MCF 10A (cell line): ENCODE measurements at regions of chr14 and their contacts with region 1.

Region 1: GRCh38 chr14:102694530-102695166 is 82.6 kb upstream of the TRAF3 start:
- DNase-seq: peak; percentile 76
- H3K4me3 Mint-ChIP-seq: no peak overlapping the region
- H3K27ac Mint-ChIP-seq: no peak overlapping the region
- H3K4me1 Mint-ChIP-seq: peaks cover 27% of the 10 kb centered on the region
- H3K27me3 Mint-ChIP-seq: no peaks in the 10 kb centered on the region
- CTCF ChIP-seq: peak; percentile 54

Region 2: DNA sequence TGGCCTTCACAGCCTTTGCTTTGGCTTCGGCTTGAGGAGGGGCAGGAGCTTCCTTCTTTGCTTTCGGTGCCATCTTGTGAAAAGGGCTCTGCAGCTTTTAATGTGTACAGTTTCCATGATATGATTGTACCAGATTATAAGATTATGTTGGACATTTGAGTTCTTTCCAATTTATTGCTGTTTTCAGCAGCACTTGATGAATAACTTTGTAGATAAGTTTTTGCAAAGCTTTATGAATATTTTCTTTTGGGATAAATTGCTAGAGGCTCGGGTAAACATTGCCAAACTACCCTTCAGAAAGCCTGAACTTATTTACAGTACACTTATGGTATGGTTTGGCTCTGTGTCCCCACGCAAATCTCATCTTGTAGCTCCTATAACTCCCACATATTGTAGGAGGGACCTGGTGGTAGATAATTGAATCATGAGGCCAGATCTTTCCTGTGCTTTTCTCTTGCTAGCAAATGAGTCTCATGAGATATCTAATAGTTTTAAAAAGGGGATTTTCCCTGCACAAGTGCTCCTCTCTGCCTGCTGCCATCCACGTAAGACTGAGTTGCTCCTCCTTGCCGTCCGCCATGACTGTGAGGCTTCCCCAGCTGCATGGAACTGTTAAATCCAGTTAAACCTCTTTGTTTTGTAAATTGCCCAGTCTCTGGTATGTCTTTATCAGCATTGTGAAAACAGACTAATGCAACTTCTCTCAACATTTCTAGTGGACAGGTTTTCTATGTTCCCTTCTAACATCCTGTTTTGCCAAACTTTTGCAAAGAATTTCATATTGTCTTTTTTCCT is 31.8 kb before region 1 on chr14:
- CTCF ChIA-PET with region 1: interaction called, 11 read pairs
- POLR2A ChIA-PET with region 1: no interaction called
- intact Hi-C with region 1: no loop called
- DNase-seq: no peak
- H3K4me3 Mint-ChIP-seq: no peak overlapping the region
- H3K27ac Mint-ChIP-seq: no peak overlapping the region
- H3K4me1 Mint-ChIP-seq: peaks cover 32% of the 10 kb centered on the region
- H3K27me3 Mint-ChIP-seq: no peaks in the 10 kb centered on the region
- CTCF ChIP-seq: no peak

Region 3: GRCh38 chr14:102708494-102708893 is 13.8 kb after region 1 on chr14:
- CTCF ChIA-PET with region 1: interaction called, 12 read pairs
- POLR2A ChIA-PET with region 1: interaction called, 3 read pairs
- intact Hi-C with region 1: no loop called
- DNase-seq: no peak
- H3K4me3 Mint-ChIP-seq: no peak overlapping the region
- H3K27ac Mint-ChIP-seq: peak overlapping the region; percentile 42
- H3K4me1 Mint-ChIP-seq: no peaks in the 10 kb centered on the region
- H3K27me3 Mint-ChIP-seq: no peaks in the 10 kb centered on the region
- CTCF ChIP-seq: no peak

Region 4: GRCh38 chr14:102736981-102737397 is 42.3 kb after region 1 on chr14:
- CTCF ChIA-PET with region 1: no interaction called
- POLR2A ChIA-PET with region 1: no interaction called
- intact Hi-C with region 1: no loop called
- DNase-seq: no peak
- H3K4me3 Mint-ChIP-seq: no peak overlapping the region
- H3K27ac Mint-ChIP-seq: no peak overlapping the region
- H3K4me1 Mint-ChIP-seq: no peaks in the 10 kb centered on the region
- H3K27me3 Mint-ChIP-seq: no peaks in the 10 kb centered on the region
- CTCF ChIP-seq: no peak

Region 5: GRCh38 chr14:102748806-102749205 is 54.2 kb after region 1 on chr14:
- CTCF ChIA-PET with region 1: no interaction called
- POLR2A ChIA-PET with region 1: no interaction called
- intact Hi-C with region 1: no loop called
- DNase-seq: no peak
- H3K4me3 Mint-ChIP-seq: no peak overlapping the region
- H3K27ac Mint-ChIP-seq: no peak overlapping the region
- H3K4me1 Mint-ChIP-seq: no peaks in the 10 kb centered on the region
- H3K27me3 Mint-ChIP-seq: no peaks in the 10 kb centered on the region
- CTCF ChIP-seq: no peak

Region 6: GRCh38 chr14:102805371-102806246 is 111.0 kb after region 1 on chr14:
- CTCF ChIA-PET with region 1: no interaction called
- POLR2A ChIA-PET with region 1: no interaction called
- intact Hi-C with region 1: no loop called
- DNase-seq: peak; percentile 76
- H3K4me3 Mint-ChIP-seq: no peak overlapping the region
- H3K27ac Mint-ChIP-seq: no peak overlapping the region
- H3K4me1 Mint-ChIP-seq: peaks cover 22% of the 10 kb centered on the region
- H3K27me3 Mint-ChIP-seq: no peaks in the 10 kb centered on the region
- CTCF ChIP-seq: no peak

Region 7: DNA sequence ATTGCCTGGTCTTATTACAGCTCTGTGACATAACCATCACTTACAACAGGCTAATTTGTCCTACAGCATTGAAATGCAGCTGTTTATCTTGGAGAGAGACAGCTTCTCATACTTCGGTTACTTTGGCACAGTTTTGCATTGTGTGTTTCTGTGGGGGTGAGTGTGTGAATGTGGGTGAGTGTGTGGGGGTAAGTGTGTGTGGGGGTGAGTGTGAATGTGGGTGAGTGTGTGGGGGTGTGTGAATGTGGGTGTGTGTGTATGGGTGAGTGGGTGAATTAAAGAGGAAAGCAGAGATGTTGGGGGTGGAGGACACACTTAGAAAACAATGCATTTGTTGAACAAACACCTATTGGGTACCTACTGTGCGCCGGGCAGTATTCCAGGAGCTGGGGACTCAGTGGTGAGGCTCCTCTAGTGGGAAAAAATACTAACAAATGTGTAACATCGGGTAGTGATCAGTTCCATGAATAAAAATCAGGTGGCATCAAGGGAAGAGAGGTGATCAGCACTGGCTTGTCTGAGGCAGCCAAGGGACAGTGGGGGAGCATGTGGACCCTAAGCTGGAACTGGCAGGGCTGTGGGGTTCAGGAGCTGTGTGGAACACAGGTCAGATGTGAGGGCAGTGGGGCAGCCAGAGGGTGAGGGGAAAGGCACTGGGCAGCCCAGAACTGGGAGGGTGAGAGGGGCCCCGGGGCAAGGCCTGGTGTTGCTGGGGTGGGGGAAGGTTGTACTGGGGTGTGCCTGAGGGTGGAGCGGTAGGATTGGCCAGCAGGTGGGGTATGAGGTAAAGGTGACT is 183.7 kb after region 1 on chr14:
- CTCF ChIA-PET with region 1: no interaction called
- POLR2A ChIA-PET with region 1: no interaction called
- intact Hi-C with region 1: no loop called
- DNase-seq: no peak
- H3K4me3 Mint-ChIP-seq: no peak overlapping the region
- H3K27ac Mint-ChIP-seq: no peak overlapping the region
- H3K4me1 Mint-ChIP-seq: no peaks in the 10 kb centered on the region
- H3K27me3 Mint-ChIP-seq: no peaks in the 10 kb centered on the region
- CTCF ChIP-seq: no peak

Region 8: DNA sequence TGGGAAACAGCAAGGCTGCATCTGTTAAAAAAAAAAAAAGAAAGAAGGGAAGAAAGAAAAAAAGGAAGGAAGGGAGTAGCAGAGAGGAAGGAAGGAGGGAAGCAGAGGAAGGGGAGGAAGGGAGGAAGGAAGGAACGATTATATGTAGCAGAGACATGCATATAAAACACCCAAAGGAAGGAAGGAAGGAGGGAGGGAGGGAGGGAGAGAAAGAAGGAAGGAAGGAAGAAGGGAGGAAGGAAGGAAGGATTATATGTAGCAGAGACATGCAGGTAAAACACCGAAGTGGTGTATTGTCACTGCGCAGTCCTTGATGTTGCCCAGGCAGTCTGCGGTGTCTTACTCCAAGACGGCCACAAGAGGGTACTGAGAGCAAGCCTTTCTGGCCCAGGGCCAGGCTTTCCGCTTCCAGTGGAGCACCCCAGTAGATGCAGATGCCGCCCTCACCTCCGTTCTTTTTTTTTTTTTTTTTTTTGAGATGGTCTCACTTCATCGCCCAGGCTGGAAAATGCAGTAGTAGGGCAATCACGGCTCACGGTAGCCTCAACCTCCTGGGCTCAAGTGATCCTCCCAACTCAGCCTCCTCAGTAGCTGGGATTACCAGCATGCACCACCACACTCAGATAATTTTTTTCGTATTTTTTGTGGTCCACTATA is 383.6 kb after region 1 on chr14:
- CTCF ChIA-PET with region 1: interaction called, 3 read pairs
- POLR2A ChIA-PET with region 1: no interaction called
- intact Hi-C with region 1: loop called (anchors 10 kb)
- DNase-seq: peak; percentile 86
- H3K4me3 Mint-ChIP-seq: no peak overlapping the region
- H3K27ac Mint-ChIP-seq: no peak overlapping the region
- H3K4me1 Mint-ChIP-seq: peaks cover 6% of the 10 kb centered on the region
- H3K27me3 Mint-ChIP-seq: no peaks in the 10 kb centered on the region
- CTCF ChIP-seq: peak; percentile 62